CD4-positive, alpha-beta T cell (primary cell): ENCODE measurements at regions of chr4 and their contacts with region 1.

Region 1: DNA sequence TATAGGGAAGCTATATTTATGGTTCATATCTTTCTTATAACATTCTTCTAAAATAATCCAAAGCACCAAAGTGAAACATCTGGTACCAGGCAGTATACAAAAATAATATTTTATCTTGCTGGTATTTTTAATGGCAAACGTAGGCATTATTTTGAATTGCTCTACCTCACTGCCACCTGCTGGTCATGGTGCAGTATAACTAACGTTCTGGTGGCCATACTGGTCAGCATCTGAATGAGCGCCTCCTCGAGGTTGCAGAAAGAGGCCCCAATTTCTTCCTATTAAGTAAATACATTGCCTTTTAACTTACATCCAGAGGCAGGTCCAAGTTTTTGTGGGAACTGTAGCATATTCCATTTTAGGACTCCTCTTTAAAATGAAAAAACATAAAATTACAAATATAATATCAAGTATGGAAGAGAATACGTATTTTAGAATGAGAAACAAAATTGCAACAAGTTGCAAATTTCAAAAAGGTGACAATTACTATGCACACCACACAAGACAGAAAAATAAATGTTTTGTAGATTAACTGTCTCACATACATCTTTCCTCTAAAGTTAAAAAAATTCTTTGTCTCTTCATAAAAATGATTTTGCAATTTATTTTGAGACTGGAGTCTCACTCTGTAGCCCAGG is 22.9 kb upstream of the CWH43 start:
- DNase-seq: peak; percentile 56 to 89 (median 68)
- ATAC-seq: peak; percentile 100
- H3K4me3 ChIP-seq: no peak overlapping the region
- H3K4me3 Mint-ChIP-seq: no peak overlapping the region
- H3K27ac ChIP-seq: no peak overlapping the region
- H3K27ac Mint-ChIP-seq: no peak overlapping the region
- H3K4me1 ChIP-seq: no peaks in the 10 kb centered on the region
- H3K4me1 Mint-ChIP-seq: no peaks in the 10 kb centered on the region
- H3K27me3 ChIP-seq: no peaks in the 10 kb centered on the region
- H3K27me3 Mint-ChIP-seq: no peaks in the 10 kb centered on the region
- CTCF ChIP-seq: peak; percentile 99

Region 2: GRCh38 chr4:48445704-48446103 is 517.5 kb before region 1 on chr4:
- CTCF ChIA-PET with region 1: no interaction called
- POLR2A ChIA-PET with region 1: no interaction called
- intact Hi-C with region 1: loop called (anchors 2 to 5 kb)
- DNase-seq: peak in 3 of 14 experiments; percentile 15 to 23 (median 18)
- ATAC-seq: no peak
- H3K4me3 ChIP-seq: no peak overlapping the region
- H3K4me3 Mint-ChIP-seq: no peak overlapping the region
- H3K27ac ChIP-seq: no peak overlapping the region
- H3K27ac Mint-ChIP-seq: no peak overlapping the region
- H3K4me1 ChIP-seq: no peaks in the 10 kb centered on the region
- H3K4me1 Mint-ChIP-seq: no peaks in the 10 kb centered on the region
- H3K27me3 ChIP-seq: peaks cover 0 to 6% of the 10 kb centered on the region in 2 experiments
- H3K27me3 Mint-ChIP-seq: peaks cover 23% of the 10 kb centered on the region
- CTCF ChIP-seq: peak; percentile 74

Region 3: GRCh38 chr4:48578132-48578968 is 384.8 kb before region 1 on chr4:
- CTCF ChIA-PET with region 1: interaction called, 19 read pairs
- POLR2A ChIA-PET with region 1: interaction called, 3 read pairs
- intact Hi-C with region 1: loop called (anchors 1 kb)
- DNase-seq: peak in 13 of 14 experiments; percentile 4 to 79 (median 34)
- ATAC-seq: peak; percentile 97
- H3K4me3 ChIP-seq: no peak overlapping the region
- H3K4me3 Mint-ChIP-seq: no peak overlapping the region
- H3K27ac ChIP-seq: no peak overlapping the region
- H3K27ac Mint-ChIP-seq: peak overlapping the region; percentile 1
- H3K4me1 ChIP-seq: no peaks in the 10 kb centered on the region
- H3K4me1 Mint-ChIP-seq: no peaks in the 10 kb centered on the region
- H3K27me3 ChIP-seq: no peaks in the 10 kb centered on the region
- H3K27me3 Mint-ChIP-seq: no peaks in the 10 kb centered on the region
- CTCF ChIP-seq: peak; percentile 95

Region 4: GRCh38 chr4:48673537-48673936 is 289.6 kb before region 1 on chr4:
- CTCF ChIA-PET with region 1: no interaction called
- POLR2A ChIA-PET with region 1: no interaction called
- intact Hi-C with region 1: loop called in 1 of 2 experiments (anchors 10 kb)
- DNase-seq: no peak
- ATAC-seq: no peak
- H3K4me3 ChIP-seq: no peak overlapping the region
- H3K4me3 Mint-ChIP-seq: no peak overlapping the region
- H3K27ac ChIP-seq: no peak overlapping the region
- H3K27ac Mint-ChIP-seq: no peak overlapping the region
- H3K4me1 ChIP-seq: peaks cover 5% of the 10 kb centered on the region
- H3K4me1 Mint-ChIP-seq: peaks cover 33% of the 10 kb centered on the region
- H3K27me3 ChIP-seq: no peaks in the 10 kb centered on the region
- H3K27me3 Mint-ChIP-seq: no peaks in the 10 kb centered on the region
- CTCF ChIP-seq: no peak